ENCODE measurements at regions of chr2 and their contacts with region 1.

Region 1: DNA sequence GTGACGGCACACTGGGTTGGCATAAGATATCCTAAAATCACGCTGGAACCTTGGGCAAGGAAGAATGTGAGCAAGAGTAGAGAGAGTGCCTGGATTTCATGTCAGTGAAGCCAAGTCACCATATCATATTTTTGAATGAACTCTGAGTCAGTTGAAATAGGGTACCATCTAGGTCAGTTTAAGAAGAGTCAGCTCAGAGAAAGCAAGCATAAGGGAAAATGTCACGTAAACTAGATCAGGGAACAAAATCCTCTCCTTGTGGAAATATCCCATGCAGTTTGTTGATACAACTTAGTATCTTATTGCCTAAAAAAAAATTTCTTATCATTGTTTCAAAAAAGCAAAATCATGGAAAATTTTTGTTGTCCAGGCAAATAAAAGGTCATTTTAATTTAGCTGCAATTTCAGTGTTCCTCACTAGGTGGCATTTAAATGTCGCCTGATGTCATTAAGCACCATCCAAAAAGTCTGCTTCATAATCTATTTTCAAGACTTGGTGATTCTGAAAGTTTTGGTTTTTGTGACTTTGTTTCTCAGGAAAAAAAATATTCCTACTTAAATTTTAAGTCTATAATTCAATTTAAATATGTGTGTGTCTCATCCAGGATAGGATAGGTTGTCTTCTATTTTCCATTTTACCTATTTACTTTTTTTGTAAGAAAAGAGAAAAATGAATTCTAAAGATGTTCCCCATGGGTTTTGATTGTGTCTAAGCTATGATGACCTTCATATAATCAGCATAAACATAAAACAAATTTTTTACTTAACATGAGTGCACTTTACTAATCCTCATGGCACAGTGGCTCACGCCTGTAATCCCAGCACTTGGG is 19.6 kb downstream of the RSAD2 start:
- DNase-seq: peak; percentile 52
- H3K4me3 ChIP-seq: no peak overlapping the region; a peak in 1 of 4 replicates
- H3K27ac ChIP-seq: no peak overlapping the region
- H3K4me1 ChIP-seq: no peaks in the 10 kb centered on the region; a peak in 1 of 4 replicates
- H3K27me3 ChIP-seq: no peaks in the 10 kb centered on the region
- CTCF ChIP-seq: peak; percentile 90
- EP300 ChIP-seq: no peak
- RAD21 ChIP-seq: peak; percentile 97

Region 2: DNA sequence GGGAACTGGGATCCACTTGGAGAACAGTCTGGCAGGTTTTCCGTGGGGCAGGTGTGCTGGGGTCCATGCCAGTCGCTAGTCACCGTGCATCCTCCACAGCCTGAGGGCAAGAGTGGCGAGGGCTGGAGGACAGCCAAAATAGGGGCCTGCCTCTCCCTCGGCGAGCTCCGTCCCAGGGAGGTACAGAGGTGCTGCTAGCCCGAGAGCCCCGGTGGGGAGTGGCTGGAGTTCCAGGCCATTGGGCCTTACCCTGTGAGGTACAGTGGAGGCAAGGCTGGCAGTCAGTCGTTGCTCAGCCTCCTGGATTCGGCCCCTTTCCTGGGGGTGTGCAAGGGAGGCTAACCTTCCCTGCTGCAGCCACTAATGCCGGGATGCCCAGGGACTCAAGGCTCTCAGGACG is 438.0 kb before region 1 on chr2:
- CTCF ChIA-PET with region 1: no interaction called
- POLR2A ChIA-PET with region 1: no interaction called
- DNase-seq: no peak
- H3K4me3 ChIP-seq: no peak overlapping the region
- H3K27ac ChIP-seq: no peak overlapping the region
- H3K4me1 ChIP-seq: no peaks in the 10 kb centered on the region
- H3K27me3 ChIP-seq: no peaks in the 10 kb centered on the region
- CTCF ChIP-seq: no peak
- EP300 ChIP-seq: no peak
- RAD21 ChIP-seq: no peak

Region 3: DNA sequence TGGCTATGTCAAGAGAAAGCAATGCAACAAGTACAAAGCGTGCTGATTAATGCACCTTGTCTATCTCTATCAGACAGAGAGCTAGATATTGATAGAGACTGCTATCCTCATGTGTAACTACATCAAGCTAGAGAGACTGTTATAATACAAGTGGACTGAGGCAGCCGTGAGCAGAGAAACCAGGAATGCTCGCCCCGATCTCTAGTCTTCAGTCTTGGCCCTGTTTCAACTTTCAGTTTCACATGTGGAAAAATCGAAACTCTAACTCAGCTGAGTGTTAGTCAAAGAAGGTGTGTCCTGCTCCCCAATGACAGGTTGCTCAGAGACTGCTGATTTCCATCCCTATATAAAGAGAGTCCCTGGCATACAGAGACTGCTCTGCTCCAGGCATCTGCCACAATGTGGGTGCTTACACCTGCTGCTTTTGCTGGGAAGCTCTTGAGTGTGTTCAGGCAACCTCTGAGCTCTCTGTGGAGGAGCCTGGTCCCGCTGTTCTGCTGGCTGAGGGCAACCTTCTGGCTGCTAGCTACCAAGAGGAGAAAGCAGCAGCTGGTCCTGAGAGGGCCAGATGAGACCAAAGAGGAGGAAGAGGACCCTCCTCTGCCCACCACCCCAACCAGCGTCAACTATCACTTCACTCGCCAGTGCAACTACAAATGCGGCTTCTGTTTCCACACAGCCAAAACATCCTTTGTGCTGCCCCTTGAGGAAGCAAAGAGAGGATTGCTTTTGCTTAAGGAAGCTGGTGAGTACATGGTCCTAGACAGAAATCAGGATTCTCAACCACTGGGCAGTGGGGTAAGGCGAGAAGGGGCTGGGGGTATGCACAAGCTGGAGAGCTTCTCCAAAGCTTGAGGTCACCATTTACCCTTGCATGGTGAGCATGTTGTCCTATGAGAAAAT is 19.5 kb before region 1 on chr2 and contains the start of gene RSAD2:
- CTCF ChIA-PET with region 1: interaction called, 73 read pairs
- POLR2A ChIA-PET with region 1: no interaction called
- DNase-seq: no peak
- H3K4me3 ChIP-seq: peak within 1 kb of the TSS; percentile 32 to 33; a peak in 3 of 4 replicates
- H3K27ac ChIP-seq: no peak within 1 kb of the TSS
- H3K4me1 ChIP-seq: peaks cover 0 to 5% of the 10 kb centered on the region in 2 experiments; a peak in 2 of 4 replicates
- H3K27me3 ChIP-seq: no peaks in the 10 kb centered on the region
- CTCF ChIP-seq: no peak
- EP300 ChIP-seq: no peak
- RAD21 ChIP-seq: no peak
- polyA plus RNA-seq, gene RSAD2: 0.15 and 0.35 TPM in 2 replicates

Region 4: DNA sequence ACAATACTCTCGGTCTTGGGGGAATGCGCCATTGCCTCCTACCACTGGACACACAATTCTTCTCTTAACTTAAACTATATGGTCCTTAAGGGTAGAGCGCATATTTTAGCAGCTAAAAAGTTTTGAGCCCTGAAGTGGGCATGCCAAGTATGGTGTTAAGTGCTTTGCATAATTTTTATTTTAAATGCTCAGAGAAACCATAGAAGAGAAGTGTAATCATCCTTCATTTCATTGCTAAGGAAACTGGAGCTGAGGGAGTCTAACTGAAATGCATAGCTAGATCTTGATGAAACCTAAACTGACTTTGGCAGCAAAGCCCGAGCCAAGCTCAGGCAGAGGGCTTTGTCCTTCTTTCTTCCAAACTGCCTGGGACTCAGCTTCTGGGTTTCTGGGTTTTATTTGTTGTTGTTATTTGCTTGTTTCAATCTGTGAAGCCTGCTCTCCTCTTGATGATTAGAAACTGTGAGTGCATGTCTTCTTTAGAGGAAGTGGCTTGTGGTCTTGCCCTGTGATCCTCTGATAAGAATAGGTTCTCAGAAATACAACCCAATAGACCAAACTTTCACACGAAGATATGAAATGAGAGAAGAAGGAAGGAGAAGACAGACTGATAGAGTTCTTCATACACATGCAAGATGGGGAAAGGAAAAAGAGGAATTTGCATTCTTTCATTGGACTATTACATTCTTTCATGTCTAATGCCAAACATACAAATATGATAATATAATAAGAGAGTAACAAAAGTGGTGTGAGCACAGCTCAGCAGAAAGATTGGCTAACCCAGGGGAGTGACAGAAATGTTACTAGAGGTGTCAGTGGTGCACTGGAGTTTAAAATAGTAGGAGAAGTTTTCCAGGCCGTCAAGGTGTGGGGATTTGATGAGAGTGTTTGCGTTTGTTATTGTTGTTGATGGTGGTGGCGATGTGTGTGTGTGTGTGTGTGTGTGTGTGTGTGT is 12.6 kb after region 1 on chr2:
- CTCF ChIA-PET with region 1: interaction called, 134 read pairs
- POLR2A ChIA-PET with region 1: no interaction called
- DNase-seq: no peak
- H3K4me3 ChIP-seq: no peak overlapping the region
- H3K27ac ChIP-seq: no peak overlapping the region
- H3K4me1 ChIP-seq: no peaks in the 10 kb centered on the region; a peak in 1 of 4 replicates
- H3K27me3 ChIP-seq: no peaks in the 10 kb centered on the region
- CTCF ChIP-seq: no peak
- EP300 ChIP-seq: no peak
- RAD21 ChIP-seq: no peak

Region 5: DNA sequence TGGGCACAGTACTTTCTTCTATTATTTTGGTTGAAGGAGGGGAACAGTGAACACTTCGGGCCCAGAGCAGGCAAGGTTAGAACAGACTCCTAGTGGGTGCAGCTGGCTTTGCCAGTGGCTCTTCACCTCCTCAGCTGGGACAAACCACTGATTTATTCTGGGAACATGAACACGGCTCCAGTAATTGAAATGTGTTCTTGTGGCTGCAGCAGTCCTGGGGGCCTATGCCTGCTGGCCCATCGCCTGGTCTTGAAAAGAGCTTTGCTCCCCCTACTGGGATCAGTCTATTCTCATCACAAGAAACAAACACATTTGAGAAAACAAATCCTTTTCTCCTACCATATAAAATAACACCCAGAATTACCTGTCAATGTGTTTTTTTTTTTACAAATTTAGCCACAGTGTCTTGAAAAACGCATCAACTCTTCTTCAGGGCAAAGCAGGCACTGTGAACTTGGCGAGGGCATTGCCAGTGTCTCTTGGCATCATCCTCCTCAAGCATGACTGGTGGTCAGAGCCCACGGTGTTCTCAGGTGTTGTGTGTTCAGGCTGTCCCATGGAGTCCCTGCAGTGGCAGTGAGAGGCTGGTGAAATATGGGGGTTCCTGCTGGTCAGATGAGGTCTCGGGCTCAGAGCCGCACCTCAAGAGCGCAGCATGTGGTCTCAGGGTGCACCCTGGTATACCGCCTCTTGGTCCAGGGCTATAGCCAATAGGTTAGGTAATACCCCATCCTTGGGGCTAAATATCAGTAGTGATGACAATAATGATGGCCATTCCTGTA is 71.4 kb after region 1 on chr2:
- CTCF ChIA-PET with region 1: interaction called, 14 read pairs
- POLR2A ChIA-PET with region 1: no interaction called
- DNase-seq: peak; percentile 50
- H3K4me3 ChIP-seq: no peak overlapping the region
- H3K27ac ChIP-seq: peak overlapping the region in 1 of 2 experiments; percentile 39; a peak in 1 of 4 replicates
- H3K4me1 ChIP-seq: peaks cover 0 to 26% of the 10 kb centered on the region in 2 experiments; a peak in 1 of 4 replicates
- H3K27me3 ChIP-seq: no peaks in the 10 kb centered on the region
- CTCF ChIP-seq: peak; percentile 32; the same call in 1 of the 2 replicates
- EP300 ChIP-seq: no peak
- RAD21 ChIP-seq: peak; percentile 56

Region 6: GRCh38 chr2:7014174-7014640 is 117.1 kb after region 1 on chr2:
- CTCF ChIA-PET with region 1: interaction called, 59 read pairs
- POLR2A ChIA-PET with region 1: no interaction called
- DNase-seq: peak; percentile 63
- H3K4me3 ChIP-seq: peak overlapping the region in 1 of 2 experiments; percentile 3; a peak in 1 of 4 replicates
- H3K27ac ChIP-seq: peak overlapping the region; percentile 99
- H3K4me1 ChIP-seq: peaks cover 46 to 94% of the 10 kb centered on the region in 2 experiments
- H3K27me3 ChIP-seq: no peaks in the 10 kb centered on the region
- CTCF ChIP-seq: peak; percentile 80
- EP300 ChIP-seq: no peak
- RAD21 ChIP-seq: peak; percentile 71

Region 7: GRCh38 chr2:7037340-7038333 is 140.5 kb after region 1 on chr2:
- CTCF ChIA-PET with region 1: interaction called, 177 read pairs
- POLR2A ChIA-PET with region 1: interaction called, 5 read pairs
- DNase-seq: peak; percentile 87
- H3K4me3 ChIP-seq: no peak overlapping the region
- H3K27ac ChIP-seq: peak overlapping the region in 1 of 2 experiments; percentile 31; a peak in 1 of 4 replicates
- H3K4me1 ChIP-seq: peaks cover 0 to 29% of the 10 kb centered on the region in 2 experiments; a peak in 2 of 4 replicates
- H3K27me3 ChIP-seq: no peaks in the 10 kb centered on the region
- CTCF ChIP-seq: peak; percentile 91
- EP300 ChIP-seq: no peak
- RAD21 ChIP-seq: peak; percentile 98

Measured in SK-N-SH (cell line).